ENCODE measurements at regions of chr18 and their contacts with region 1.

Region 1: GRCh38 chr18:5600378-5601071 is 56.7 kb upstream of the EPB41L3 start:
- DNase-seq: no peak
- H3K4me3 ChIP-seq: no peak overlapping the region
- H3K27ac ChIP-seq: no peak overlapping the region
- H3K4me1 ChIP-seq: no peaks in the 10 kb centered on the region
- H3K27me3 ChIP-seq: no peaks in the 10 kb centered on the region
- CTCF ChIP-seq: no peak

Region 2: DNA sequence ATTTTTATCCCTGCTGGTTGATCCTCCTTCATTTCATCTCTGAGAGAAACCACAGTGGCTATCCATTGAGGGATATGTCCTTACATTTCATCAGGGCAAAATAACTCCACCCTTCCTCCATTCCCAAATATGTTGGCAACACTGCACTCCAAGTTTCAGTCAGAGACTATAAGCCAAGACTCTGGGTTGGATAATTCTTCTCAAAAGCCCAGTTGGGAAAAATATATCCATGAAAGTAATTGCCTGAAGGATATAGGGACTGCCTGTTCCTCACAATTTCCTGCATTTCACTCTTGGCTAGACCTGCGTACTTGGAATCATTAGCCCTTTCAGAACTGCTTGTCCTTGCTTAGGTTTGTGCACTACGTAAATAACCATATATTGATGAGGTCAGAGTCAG is 28.9 kb before region 1 on chr18:
- CTCF ChIA-PET with region 1: no interaction called
- dilution Hi-C with region 1: no loop called
- in situ Hi-C with region 1: no loop called
- intact Hi-C with region 1: no loop called
- DNase-seq: no peak
- H3K4me3 ChIP-seq: no peak overlapping the region
- H3K27ac ChIP-seq: no peak overlapping the region
- H3K4me1 ChIP-seq: no peaks in the 10 kb centered on the region
- H3K27me3 ChIP-seq: no peaks in the 10 kb centered on the region
- CTCF ChIP-seq: no peak

Region 3: GRCh38 chr18:5662586-5663090 is 62.1 kb after region 1 on chr18:
- CTCF ChIA-PET with region 1: no interaction called
- dilution Hi-C with region 1: no loop called
- in situ Hi-C with region 1: no loop called
- intact Hi-C with region 1: no loop called
- DNase-seq: no peak
- H3K4me3 ChIP-seq: no peak overlapping the region
- H3K27ac ChIP-seq: no peak overlapping the region
- H3K4me1 ChIP-seq: no peaks in the 10 kb centered on the region
- H3K27me3 ChIP-seq: no peaks in the 10 kb centered on the region
- CTCF ChIP-seq: no peak

Region 4: DNA sequence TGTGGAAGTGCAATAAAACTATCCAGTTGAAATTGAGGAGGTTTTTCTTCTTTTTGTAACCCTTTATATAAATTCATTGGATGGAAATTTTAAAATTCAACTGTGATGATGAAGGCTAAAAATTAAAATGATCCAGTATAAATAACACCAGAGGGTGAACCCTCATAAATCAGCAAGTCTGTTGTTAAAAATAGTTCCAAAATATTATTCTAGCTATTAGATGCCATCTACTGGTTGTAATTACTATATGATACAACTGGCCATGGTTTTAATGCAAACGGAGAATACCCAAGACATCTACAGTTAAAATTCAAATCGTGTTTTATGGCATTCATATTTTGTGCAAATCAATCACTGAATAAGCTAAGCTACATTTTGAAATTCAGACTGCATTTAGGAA is 241.0 kb after region 1 on chr18:
- CTCF ChIA-PET with region 1: no interaction called
- dilution Hi-C with region 1: no loop called
- in situ Hi-C with region 1: no loop called
- intact Hi-C with region 1: loop called (anchors 5 kb)
- DNase-seq: no peak
- H3K4me3 ChIP-seq: no peak overlapping the region
- H3K27ac ChIP-seq: no peak overlapping the region
- H3K4me1 ChIP-seq: no peaks in the 10 kb centered on the region
- H3K27me3 ChIP-seq: no peaks in the 10 kb centered on the region
- CTCF ChIP-seq: no peak

Measured in mammary epithelial cell (primary cell).